GM12878 (cell line): ENCODE measurements at regions of chr1 and their contacts with region 1.

Region 1: DNA sequence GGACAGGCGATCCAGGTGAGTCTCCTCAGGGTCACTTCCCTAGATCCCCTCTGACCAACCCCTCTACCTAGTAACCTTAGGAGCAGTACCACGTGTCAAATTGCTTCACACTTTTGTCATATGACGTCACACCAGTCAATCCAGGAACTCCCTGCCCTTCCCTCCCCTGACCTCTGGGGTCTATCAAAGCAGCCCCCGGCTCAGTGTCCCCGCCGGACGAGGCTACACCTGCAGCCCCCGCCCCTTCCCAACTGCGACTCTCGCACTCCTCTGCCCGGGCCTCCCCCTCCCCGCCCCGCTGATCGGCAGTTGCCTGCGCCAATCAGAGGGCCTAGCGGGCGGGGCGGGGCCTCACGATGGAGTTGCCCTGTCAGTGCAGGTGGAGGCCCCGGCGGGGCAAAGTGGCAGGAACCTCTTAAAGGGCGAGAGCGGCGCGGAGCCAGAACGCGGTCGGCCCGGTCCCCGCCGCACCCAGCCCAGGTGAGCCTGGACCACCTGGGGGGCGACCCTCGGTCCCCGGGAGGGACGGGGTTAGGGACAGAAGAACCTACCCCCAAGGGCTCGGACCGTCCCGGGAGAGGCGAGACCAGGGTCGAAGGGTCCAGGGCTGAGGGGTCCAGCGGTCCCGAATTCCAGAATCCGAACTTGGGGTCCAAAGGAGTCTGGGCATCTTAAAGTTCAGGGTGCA is 27.5 kb upstream of the EPB41 start:
- DNase-seq: peak; percentile 32
- ATAC-seq: peak; percentile 84
- H3K4me3 ChIP-seq: peak overlapping the region; percentile 89
- H3K27ac ChIP-seq: peak overlapping the region; percentile 68
- H3K4me1 ChIP-seq: peaks cover 34% of the 10 kb centered on the region
- H3K27me3 ChIP-seq: no peaks in the 10 kb centered on the region
- CTCF ChIP-seq: no peak
- EP300 ChIP-seq: no peak
- POLR2A ChIP-seq: peak; percentile 85
- RAD21 ChIP-seq: no peak

Region 2: GRCh38 chr1:28656335-28656734 is 230.5 kb before region 1 on chr1:
- CTCF ChIA-PET with region 1: no interaction called
- POLR2A ChIA-PET with region 1: no interaction called
- RAD21 ChIA-PET with region 1: no interaction called
- SMC1A ChIA-PET with region 1: no interaction called
- in situ Hi-C with region 1: no loop called
- intact Hi-C with region 1: no loop called
- DNase-seq: no peak
- ATAC-seq: no peak
- H3K4me3 ChIP-seq: no peak overlapping the region
- H3K27ac ChIP-seq: no peak overlapping the region
- H3K4me1 ChIP-seq: no peaks in the 10 kb centered on the region
- H3K27me3 ChIP-seq: no peaks in the 10 kb centered on the region
- CTCF ChIP-seq: no peak
- EP300 ChIP-seq: no peak
- POLR2A ChIP-seq: no peak
- RAD21 ChIP-seq: no peak

Region 3: GRCh38 chr1:28914228-28915030 is 27.6 kb after region 1 on chr1 and contains the start of gene EPB41:
- CTCF ChIA-PET with region 1: interaction called, 5 read pairs
- POLR2A ChIA-PET with region 1: interaction called, 19 read pairs
- RAD21 ChIA-PET with region 1: interaction called, 25 read pairs
- SMC1A ChIA-PET with region 1: interaction called, 5 read pairs
- in situ Hi-C with region 1: no loop called
- intact Hi-C with region 1: no loop called
- DNase-seq: peak; percentile 56
- ATAC-seq: peak; percentile 97
- H3K4me3 ChIP-seq: peak within 1 kb of the TSS; percentile 66
- H3K27ac ChIP-seq: peak within 1 kb of the TSS; percentile 40; the same call in 1 of the 2 replicates
- H3K4me1 ChIP-seq: peaks cover 7% of the 10 kb centered on the region
- H3K27me3 ChIP-seq: no peaks in the 10 kb centered on the region
- CTCF ChIP-seq: no peak
- EP300 ChIP-seq: no peak
- POLR2A ChIP-seq: peak; percentile 73
- RAD21 ChIP-seq: no peak
- polyA plus RNA-seq, gene EPB41: 1.1 to 3.1 TPM

Region 4: DNA sequence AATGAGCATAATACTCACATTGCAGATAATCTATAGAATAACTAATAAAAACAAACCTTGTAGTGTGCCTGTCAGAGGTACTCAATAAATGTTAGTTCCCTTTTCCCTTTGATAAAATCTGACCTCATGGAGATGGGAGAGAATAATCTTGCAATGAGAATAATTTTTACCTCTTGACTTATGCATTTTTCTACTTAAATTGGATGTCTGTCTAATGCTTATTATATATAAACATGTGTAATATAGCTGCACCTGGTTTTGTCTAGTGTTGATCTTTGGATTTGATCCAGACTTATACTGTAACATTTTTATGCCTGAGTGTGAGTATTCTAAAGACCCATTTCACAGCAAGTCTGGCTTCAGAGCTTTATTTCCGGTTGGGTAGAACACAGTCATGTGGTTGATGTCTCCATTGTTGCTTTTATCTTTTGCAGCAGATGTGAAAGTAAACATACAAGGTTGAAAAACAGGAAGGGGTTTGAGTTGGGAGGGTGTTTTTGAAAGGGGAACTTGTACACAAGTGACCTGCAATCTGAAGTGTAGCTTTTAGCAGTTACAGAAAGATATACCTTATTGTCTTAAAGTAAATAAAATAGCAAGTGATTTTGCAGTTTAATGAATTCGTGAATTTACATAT is 39.9 kb after region 1 on chr1:
- CTCF ChIA-PET with region 1: interaction called, 8 read pairs
- POLR2A ChIA-PET with region 1: interaction called, 9 read pairs
- RAD21 ChIA-PET with region 1: interaction called, 36 read pairs
- SMC1A ChIA-PET with region 1: interaction called, 9 read pairs
- in situ Hi-C with region 1: no loop called
- intact Hi-C with region 1: no loop called
- DNase-seq: peak; percentile 91
- ATAC-seq: peak; percentile 96
- H3K4me3 ChIP-seq: peak overlapping the region; percentile 33
- H3K27ac ChIP-seq: peak overlapping the region; percentile 72
- H3K4me1 ChIP-seq: peaks cover 24% of the 10 kb centered on the region
- H3K27me3 ChIP-seq: no peaks in the 10 kb centered on the region
- CTCF ChIP-seq: no peak
- EP300 ChIP-seq: peak in 1 of 2 experiments; percentile 57; a peak in 1 of 4 replicates
- POLR2A ChIP-seq: no peak
- RAD21 ChIP-seq: no peak

Region 5: DNA sequence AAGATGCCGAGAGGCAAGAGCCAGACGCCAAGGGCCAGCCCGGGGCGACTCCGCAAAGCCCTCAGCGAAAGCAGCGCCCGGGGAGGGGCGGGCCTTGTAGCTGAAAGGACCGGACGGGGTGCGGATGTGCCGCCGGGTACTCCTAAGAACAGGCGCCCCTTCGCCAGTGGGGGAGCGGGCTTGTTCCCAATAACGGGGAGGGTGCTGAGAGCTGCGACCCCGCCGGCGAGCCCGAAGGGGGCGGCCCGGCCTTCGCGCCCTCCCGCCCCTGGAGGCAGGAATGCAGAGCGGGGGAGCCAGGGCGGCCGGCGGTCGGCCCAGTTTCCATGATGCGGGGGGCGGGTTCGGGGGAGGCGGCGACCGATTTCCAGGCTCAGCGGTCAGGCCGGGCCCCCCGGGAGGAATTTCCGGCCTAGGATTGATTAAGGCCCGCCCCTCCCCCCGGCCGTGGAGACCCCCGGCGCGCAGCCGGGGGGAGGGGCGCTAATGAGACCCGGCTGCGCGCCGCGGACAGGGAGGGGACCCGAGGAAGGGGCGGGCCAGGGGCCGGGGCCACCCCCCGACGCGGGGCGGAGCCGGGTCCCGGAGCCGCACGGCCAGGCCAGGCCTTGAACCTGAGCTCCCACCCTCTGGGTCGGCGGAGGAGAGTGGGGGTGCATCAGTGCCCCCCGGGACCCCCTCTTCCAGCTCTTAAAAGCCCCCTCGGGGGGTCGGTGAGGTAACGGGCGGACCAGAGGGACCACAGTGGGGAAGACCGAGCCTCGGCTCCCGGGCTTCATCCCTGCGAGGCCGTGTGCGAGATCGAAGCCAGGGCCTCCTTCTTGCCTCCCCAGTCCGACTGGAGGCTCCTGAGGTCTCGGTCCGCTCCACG is 237.7 kb after region 1 on chr1:
- CTCF ChIA-PET with region 1: interaction called, 6 read pairs
- POLR2A ChIA-PET with region 1: no interaction called
- RAD21 ChIA-PET with region 1: no interaction called
- SMC1A ChIA-PET with region 1: no interaction called
- in situ Hi-C with region 1: no loop called
- intact Hi-C with region 1: loop called (anchors 1 kb)
- DNase-seq: no peak
- ATAC-seq: peak; percentile 68
- H3K4me3 ChIP-seq: peak overlapping the region; percentile 53
- H3K27ac ChIP-seq: no peak overlapping the region
- H3K4me1 ChIP-seq: no peaks in the 10 kb centered on the region
- H3K27me3 ChIP-seq: peaks cover 6 to 16% of the 10 kb centered on the region in 2 experiments; a peak in 3 of 4 replicates
- CTCF ChIP-seq: no peak
- EP300 ChIP-seq: no peak
- POLR2A ChIP-seq: no peak
- RAD21 ChIP-seq: no peak

Region 6: DNA sequence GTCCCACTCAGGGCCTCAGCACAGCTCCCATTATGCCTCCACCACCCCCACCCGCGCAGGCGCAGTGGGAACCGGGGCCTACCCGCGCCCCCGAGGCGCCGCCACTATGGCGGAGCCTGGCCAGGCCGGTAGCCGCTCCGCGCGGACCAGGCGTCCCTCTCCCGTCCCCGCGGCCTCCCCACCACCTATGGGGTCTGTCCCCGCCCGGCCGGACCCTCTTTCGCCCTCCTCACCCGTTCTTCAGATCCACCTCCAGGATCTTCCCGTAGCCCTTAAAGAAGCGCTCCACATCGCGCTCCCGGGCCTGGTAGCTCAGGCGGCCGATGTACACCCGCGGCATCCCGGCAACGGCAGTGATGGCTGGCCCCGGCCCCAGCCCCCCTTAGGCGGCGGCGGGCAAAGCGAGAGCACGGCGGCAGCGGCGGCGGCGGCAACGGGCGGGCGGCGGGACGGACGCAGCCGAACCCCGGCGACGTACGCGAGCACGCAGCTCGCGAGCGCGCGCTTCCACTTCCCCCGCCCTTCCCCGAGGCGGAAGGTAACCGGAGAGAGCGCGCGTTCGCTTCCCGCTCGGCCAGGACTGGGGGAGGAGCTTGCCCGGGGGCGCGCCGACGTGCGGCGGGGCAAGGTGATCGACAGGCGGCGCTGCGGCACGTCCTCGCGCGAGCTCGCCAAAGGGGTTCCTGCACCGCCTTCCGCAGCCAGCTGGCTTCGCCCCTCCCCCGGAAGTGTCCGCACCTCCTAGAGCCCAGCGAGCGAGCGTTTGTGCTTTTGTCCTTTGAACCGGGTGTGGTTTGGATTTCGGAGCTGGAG is 294.7 kb after region 1 on chr1 and contains the start of gene SRSF4:
- CTCF ChIA-PET with region 1: interaction called, 27 read pairs
- POLR2A ChIA-PET with region 1: interaction called, 35 read pairs
- RAD21 ChIA-PET with region 1: interaction called, 29 read pairs
- SMC1A ChIA-PET with region 1: interaction called, 3 read pairs
- in situ Hi-C with region 1: no loop called
- intact Hi-C with region 1: no loop called
- DNase-seq: peak; percentile 94
- ATAC-seq: peak; percentile 93
- H3K4me3 ChIP-seq: peak within 1 kb of the TSS; percentile 97
- H3K27ac ChIP-seq: peak within 1 kb of the TSS; percentile 99
- H3K4me1 ChIP-seq: no peaks in the 10 kb centered on the region; the same call in none of the 2 replicates
- H3K27me3 ChIP-seq: no peaks in the 10 kb centered on the region
- CTCF ChIP-seq: peak; percentile 55 to 95 (median 63); a peak in 4 of 6 replicates
- EP300 ChIP-seq: no peak
- POLR2A ChIP-seq: peak; percentile 85
- RAD21 ChIP-seq: no peak
- polyA plus RNA-seq, gene SRSF4: 17.2 to 26.4 TPM

Region 7: GRCh38 chr1:29197585-29197924 is 310.7 kb after region 1 on chr1:
- CTCF ChIA-PET with region 1: interaction called, 173 read pairs
- POLR2A ChIA-PET with region 1: interaction called, 9 read pairs
- RAD21 ChIA-PET with region 1: interaction called, 91 read pairs
- SMC1A ChIA-PET with region 1: interaction called, 127 read pairs
- in situ Hi-C with region 1: loop called (anchors 5 kb)
- intact Hi-C with region 1: no loop called
- DNase-seq: no peak
- ATAC-seq: peak; percentile 97
- H3K4me3 ChIP-seq: no peak overlapping the region
- H3K27ac ChIP-seq: no peak overlapping the region
- H3K4me1 ChIP-seq: peaks cover 2% of the 10 kb centered on the region; the same call in 1 of the 2 replicates
- H3K27me3 ChIP-seq: no peaks in the 10 kb centered on the region
- CTCF ChIP-seq: peak; percentile 32 to 55 (median 47); a peak in 5 of 6 replicates
- EP300 ChIP-seq: no peak
- POLR2A ChIP-seq: no peak
- RAD21 ChIP-seq: peak; percentile 41

Region 8: GRCh38 chr1:29210278-29211085 is 323.6 kb after region 1 on chr1:
- CTCF ChIA-PET with region 1: interaction called, 10 read pairs
- POLR2A ChIA-PET with region 1: interaction called, 5 read pairs
- RAD21 ChIA-PET with region 1: interaction called, 6 read pairs
- SMC1A ChIA-PET with region 1: interaction called, 6 read pairs
- in situ Hi-C with region 1: no loop called
- intact Hi-C with region 1: no loop called
- DNase-seq: peak; percentile 16
- ATAC-seq: peak; percentile 95
- H3K4me3 ChIP-seq: no peak overlapping the region
- H3K27ac ChIP-seq: peak overlapping the region; percentile 75
- H3K4me1 ChIP-seq: peaks cover 13% of the 10 kb centered on the region; the same call in 1 of the 2 replicates
- H3K27me3 ChIP-seq: no peaks in the 10 kb centered on the region
- CTCF ChIP-seq: no peak
- EP300 ChIP-seq: peak; percentile 15 to 54; a peak in 1 of 4 replicates
- POLR2A ChIP-seq: no peak
- RAD21 ChIP-seq: no peak